Endothelial cell of umbilical vein (primary cell): ENCODE measurements at regions of chr7 and their contacts with region 1.

Region 1: GRCh38 chr7:22356701-22357353 is at the start of gene RAPGEF5:
- DNase-seq: no peak
- H3K4me3 ChIP-seq: peak within 1 kb of the TSS in 2 of 3 experiments; percentile 26 to 52
- H3K27ac ChIP-seq: no peak within 1 kb of the TSS
- H3K4me1 ChIP-seq: peaks cover 3% of the 10 kb centered on the region
- H3K27me3 ChIP-seq: no peaks in the 10 kb centered on the region
- CTCF ChIP-seq: no peak
- POLR2A ChIP-seq: no peak
- total RNA-seq, gene RAPGEF5: 43.2 and 43.3 TPM in 2 replicates

Region 2: DNA sequence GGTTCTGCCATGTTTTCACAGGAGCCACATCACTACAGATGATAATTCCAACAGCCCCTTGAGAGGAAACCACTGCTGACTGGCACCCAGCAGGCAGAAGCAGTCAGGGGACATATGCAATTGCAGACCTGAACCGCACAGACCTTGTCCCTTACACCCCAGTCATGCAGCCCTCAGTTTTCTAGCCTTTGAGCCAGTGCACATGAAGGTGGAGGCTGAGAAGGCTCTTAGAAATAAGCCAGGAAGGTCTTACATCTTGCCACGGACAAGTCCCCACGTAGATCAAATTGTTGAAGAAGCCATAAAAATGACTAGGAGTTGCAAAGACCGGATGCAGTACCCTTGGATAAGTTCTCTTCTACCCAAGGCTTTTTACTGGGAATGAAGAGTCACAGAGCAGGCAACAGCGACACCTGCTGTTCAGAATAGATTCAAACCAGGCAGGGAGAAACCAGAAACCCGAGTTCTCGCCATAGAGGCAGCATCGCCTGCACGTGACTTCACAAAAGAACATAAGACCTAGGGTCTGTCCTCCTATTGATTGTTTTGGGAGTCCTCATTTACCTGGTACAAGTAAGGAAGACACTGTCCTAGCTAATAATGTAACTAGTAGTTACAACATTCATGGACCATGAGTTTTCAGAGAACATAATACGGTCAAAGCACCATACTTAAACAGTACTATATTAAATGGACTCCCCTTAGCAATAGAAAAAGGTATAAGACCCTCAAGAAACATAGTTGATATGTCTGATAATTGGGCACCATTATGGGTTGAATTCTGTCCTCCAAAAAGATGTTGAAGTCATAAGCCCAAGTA is 132.0 kb after region 1 on chr7:
- CTCF ChIA-PET with region 1: no interaction called
- POLR2A ChIA-PET with region 1: no interaction called
- dilution Hi-C with region 1: no loop called
- intact Hi-C with region 1: loop called (anchors 5 kb)
- DNase-seq: peak; percentile 86
- H3K4me3 ChIP-seq: no peak overlapping the region
- H3K27ac ChIP-seq: peak overlapping the region; percentile 44
- H3K4me1 ChIP-seq: peaks cover 42% of the 10 kb centered on the region
- H3K27me3 ChIP-seq: no peaks in the 10 kb centered on the region
- CTCF ChIP-seq: peak; percentile 74 to 90
- POLR2A ChIP-seq: no peak